ENCODE measurements at regions of chr1 and their contacts with region 1.

Region 1: GRCh38 chr1:113389953-113390834 is at the start of gene MAGI3:
- DNase-seq: peak; percentile 98
- ATAC-seq: peak; percentile 81
- H3K4me3 ChIP-seq: peak within 1 kb of the TSS; percentile 75
- H3K27ac ChIP-seq: peak within 1 kb of the TSS; percentile 42
- H3K4me1 ChIP-seq: peaks cover 37% of the 10 kb centered on the region
- H3K27me3 ChIP-seq: no peaks in the 10 kb centered on the region
- CTCF ChIP-seq: no peak
- total RNA-seq, gene MAGI3: 7.2 and 10.7 TPM in 2 replicates

Region 2: DNA sequence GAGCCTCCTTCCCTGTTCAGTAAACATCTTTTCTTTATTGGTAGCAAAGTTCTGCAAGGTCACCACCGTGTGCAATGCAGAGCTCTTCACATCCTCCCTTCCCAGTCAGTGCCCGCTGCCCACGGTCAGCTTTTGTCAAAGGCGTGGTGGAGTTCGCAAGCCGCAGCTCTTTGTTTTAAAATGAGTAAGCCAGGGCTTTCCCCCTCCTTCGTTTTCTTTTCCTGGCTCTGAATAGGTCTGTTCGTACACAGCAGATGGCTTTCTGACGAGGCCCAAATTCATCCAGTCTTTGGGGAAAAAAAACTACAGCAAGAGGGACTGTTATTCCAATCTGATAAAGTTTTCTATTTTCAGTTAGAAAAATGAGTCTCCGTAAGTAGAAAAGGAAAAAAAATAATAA is 164.0 kb before region 1 on chr1:
- CTCF ChIA-PET with region 1: no interaction called
- POLR2A ChIA-PET with region 1: no interaction called
- intact Hi-C with region 1: no loop called
- DNase-seq: no peak
- ATAC-seq: no peak
- H3K4me3 ChIP-seq: no peak overlapping the region
- H3K27ac ChIP-seq: no peak overlapping the region
- H3K4me1 ChIP-seq: no peaks in the 10 kb centered on the region
- H3K27me3 ChIP-seq: no peaks in the 10 kb centered on the region
- CTCF ChIP-seq: no peak

Region 3: DNA sequence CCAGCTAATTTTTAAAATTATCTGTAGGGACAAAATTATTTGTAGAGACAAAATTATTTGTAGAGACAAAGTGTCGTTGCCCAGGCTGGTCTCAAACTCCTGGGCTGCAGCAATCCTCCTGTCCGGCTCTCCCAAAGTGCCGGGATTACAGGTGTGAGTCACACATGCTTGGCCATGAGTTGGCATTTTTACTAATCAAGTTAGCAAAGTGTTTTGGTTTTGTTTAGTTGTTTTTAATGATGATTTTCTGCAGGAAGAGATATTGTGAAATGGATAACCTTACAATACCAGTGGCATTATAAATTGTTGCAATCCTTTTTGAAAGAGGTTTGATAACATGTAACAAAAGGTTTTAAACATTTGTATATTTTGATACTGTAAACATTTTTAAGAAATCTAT is 65.2 kb before region 1 on chr1:
- CTCF ChIA-PET with region 1: no interaction called
- POLR2A ChIA-PET with region 1: interaction called, 3 read pairs
- intact Hi-C with region 1: loop called (anchors 2 kb)
- DNase-seq: peak; percentile 67
- ATAC-seq: peak; percentile 48
- H3K4me3 ChIP-seq: no peak overlapping the region
- H3K27ac ChIP-seq: peak overlapping the region; percentile 47
- H3K4me1 ChIP-seq: peaks cover 44% of the 10 kb centered on the region
- H3K27me3 ChIP-seq: no peaks in the 10 kb centered on the region
- CTCF ChIP-seq: no peak

Region 4: DNA sequence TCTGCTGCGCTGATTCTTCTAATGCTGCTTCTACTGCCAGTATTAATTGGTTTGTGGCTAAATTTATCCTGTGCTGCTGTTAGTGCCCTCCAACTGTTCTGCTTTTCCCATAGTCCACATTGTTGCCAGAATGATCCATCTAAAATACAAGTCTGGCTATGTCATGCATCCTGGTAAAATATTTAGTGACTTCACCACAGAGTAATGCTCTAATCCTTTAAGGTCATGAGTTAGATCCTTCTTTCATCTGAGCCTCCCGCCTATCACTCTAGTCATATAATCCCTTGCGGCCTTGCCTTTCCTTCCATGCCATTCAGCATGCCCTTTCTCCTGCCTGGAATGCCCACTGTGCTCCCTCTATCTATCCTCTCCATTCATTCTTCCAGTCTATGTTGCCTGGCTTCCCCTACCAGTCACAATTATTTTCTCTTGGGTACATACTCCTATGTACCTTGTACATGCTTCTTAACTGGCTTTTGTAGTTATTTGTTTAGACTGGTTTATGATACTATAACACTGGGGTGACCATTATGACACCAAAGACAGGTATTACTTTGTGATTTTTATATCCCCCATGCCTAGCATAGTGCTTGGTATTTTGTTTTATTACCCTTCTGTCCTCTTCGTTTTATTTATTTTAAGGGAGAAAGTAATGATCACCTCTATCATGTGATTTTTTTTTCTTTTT is 144.1 kb after region 1 on chr1:
- CTCF ChIA-PET with region 1: no interaction called
- POLR2A ChIA-PET with region 1: no interaction called
- intact Hi-C with region 1: loop called (anchors 5 kb)
- DNase-seq: no peak
- ATAC-seq: no peak
- H3K4me3 ChIP-seq: no peak overlapping the region
- H3K27ac ChIP-seq: no peak overlapping the region
- H3K4me1 ChIP-seq: peaks cover 21% of the 10 kb centered on the region
- H3K27me3 ChIP-seq: no peaks in the 10 kb centered on the region
- CTCF ChIP-seq: no peak

Region 5: DNA sequence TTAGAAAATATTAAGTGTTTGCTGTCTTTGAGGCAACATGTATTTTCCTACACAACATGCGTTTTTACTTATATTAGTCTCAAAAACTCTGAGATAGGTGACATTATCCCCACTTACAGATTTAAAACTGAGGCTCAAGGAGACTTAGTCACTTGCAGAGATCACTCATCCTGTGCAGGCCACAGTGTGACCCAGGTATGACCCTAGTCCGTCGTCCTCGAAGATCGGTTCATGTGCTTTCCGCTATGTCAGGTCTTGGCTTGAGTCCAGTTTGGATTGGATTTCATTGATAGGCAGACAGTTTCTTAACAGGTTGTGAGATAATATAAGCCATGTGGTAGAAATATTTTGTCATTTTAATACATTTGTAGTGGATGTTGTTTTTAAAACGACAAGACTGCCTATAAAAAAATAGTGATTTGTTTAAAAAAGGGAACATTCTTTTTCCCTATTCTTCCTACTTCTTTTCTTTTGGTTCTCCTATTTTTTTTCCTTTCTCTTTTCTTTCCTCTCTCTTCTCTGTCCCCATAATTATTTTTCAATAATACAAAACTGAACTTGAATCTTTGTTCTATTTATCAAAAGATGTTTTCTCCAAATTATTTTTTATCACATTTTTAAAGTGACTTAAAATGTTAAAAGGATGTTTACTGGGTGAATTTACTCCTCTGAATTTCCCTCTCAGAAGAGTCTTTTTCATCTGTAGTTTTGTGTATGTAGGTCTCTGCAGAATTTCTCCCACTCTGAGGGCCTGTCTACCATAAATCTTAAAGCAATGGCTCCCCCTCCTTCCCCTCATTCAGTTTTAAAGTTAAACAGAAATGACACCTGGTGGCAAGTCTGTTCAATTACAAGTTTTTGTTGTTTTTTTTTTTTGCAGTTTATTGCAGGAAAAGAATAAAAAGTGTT is 287.3 kb after region 1 on chr1:
- CTCF ChIA-PET with region 1: no interaction called
- POLR2A ChIA-PET with region 1: no interaction called
- intact Hi-C with region 1: loop called (anchors 1 kb)
- DNase-seq: peak; percentile 75
- ATAC-seq: 0 out of 2 replicates have a peak, but pooled peaks have one; percentile 18
- H3K4me3 ChIP-seq: no peak overlapping the region
- H3K27ac ChIP-seq: no peak overlapping the region
- H3K4me1 ChIP-seq: peaks cover 38% of the 10 kb centered on the region
- H3K27me3 ChIP-seq: no peaks in the 10 kb centered on the region
- CTCF ChIP-seq: peak; percentile 85

Measured in PC-3 (cell line).